B cell (primary cell): ENCODE measurements at regions of chr3 and their contacts with region 1.

Region 1: GRCh38 chr3:53255775-53256703 is at the start of gene TKT:
- DNase-seq: peak; percentile 87
- ATAC-seq: peak; percentile 87
- H3K4me3 ChIP-seq: peak within 1 kb of the TSS; percentile 72 to 83 (median 75)
- H3K4me3 Mint-ChIP-seq: peak within 1 kb of the TSS; percentile 91
- H3K27ac ChIP-seq: peak within 1 kb of the TSS; percentile 50 to 63
- H3K27ac Mint-ChIP-seq: peak within 1 kb of the TSS; percentile 81
- H3K4me1 ChIP-seq: peaks cover 30 to 42% of the 10 kb centered on the region in 2 donors
- H3K4me1 Mint-ChIP-seq: peaks cover 36% of the 10 kb centered on the region
- H3K27me3 ChIP-seq: no peaks in the 10 kb centered on the region
- H3K27me3 Mint-ChIP-seq: no peaks in the 10 kb centered on the region
- CTCF ChIP-seq: no peak
- total RNA-seq, gene TKT: 81.0 and 85.8 TPM in 2 replicates

Region 2: DNA sequence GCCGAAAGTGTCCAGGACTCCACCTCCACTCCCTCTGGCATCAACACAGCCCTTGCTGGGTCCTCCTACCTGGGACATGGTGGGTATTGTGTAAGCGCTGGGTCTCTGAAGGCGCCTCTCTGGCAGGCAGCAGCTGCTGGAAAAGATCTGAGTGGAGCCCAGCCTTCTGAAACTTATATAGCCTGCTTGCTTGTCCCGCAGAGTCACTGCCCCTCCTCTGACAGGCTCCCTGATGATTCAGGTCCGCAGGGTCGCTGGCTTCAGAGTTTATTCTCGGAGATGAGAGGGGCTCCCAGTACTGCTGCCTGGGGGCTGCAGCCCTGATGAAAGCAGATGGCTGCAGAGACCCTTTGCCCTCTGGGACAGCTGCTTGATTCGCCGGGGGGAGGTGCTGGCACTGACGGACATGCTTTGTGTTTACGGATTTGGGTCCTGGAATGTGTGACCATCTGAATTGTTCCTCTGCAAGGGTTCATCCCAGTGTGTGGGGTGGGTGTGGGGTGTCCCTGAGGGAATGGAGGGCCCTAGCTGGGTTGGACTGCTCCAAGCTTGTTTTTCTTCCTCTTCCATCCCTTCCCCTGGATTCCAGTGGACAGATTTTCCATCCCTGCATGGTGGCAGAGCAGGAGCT is 421.1 kb before region 1 on chr3 and contains the start of gene MUSTN1:
- CTCF ChIA-PET with region 1: no interaction called
- POLR2A ChIA-PET with region 1: no interaction called
- intact Hi-C with region 1: no loop called
- DNase-seq: no peak
- ATAC-seq: no peak
- H3K4me3 ChIP-seq: no peak within 1 kb of the TSS
- H3K4me3 Mint-ChIP-seq: no peak within 1 kb of the TSS
- H3K27ac ChIP-seq: no peak within 1 kb of the TSS
- H3K27ac Mint-ChIP-seq: no peak within 1 kb of the TSS
- H3K4me1 ChIP-seq: no peaks in the 10 kb centered on the region
- H3K4me1 Mint-ChIP-seq: no peaks in the 10 kb centered on the region
- H3K27me3 ChIP-seq: no peaks in the 10 kb centered on the region
- H3K27me3 Mint-ChIP-seq: no peaks in the 10 kb centered on the region
- CTCF ChIP-seq: no peak
- total RNA-seq, gene MUSTN1: 0.79 and 5.1 TPM in 2 replicates

Region 3: GRCh38 chr3:52897130-52898122 is 358.6 kb before region 1 on chr3 and contains the start of gene STIMATE:
- CTCF ChIA-PET with region 1: no interaction called
- POLR2A ChIA-PET with region 1: no interaction called
- intact Hi-C with region 1: loop called (anchors 10 kb)
- DNase-seq: peak; percentile 90
- ATAC-seq: peak; percentile 95
- H3K4me3 ChIP-seq: peak within 1 kb of the TSS; percentile 69 to 84 (median 78)
- H3K4me3 Mint-ChIP-seq: peak within 1 kb of the TSS; percentile 93
- H3K27ac ChIP-seq: peak within 1 kb of the TSS in 1 of 2 donors; percentile 52
- H3K27ac Mint-ChIP-seq: peak within 1 kb of the TSS; percentile 78
- H3K4me1 ChIP-seq: peaks cover 17 to 27% of the 10 kb centered on the region in 2 donors
- H3K4me1 Mint-ChIP-seq: peaks cover 48% of the 10 kb centered on the region
- H3K27me3 ChIP-seq: no peaks in the 10 kb centered on the region
- H3K27me3 Mint-ChIP-seq: no peaks in the 10 kb centered on the region
- CTCF ChIP-seq: no peak
- total RNA-seq, gene STIMATE: 37.7 and 38.4 TPM in 2 replicates

Region 4: GRCh38 chr3:53114011-53114400 is 142.0 kb before region 1 on chr3:
- CTCF ChIA-PET with region 1: interaction called, 4 read pairs
- POLR2A ChIA-PET with region 1: no interaction called
- intact Hi-C with region 1: loop called (anchors 5 kb)
- DNase-seq: peak; percentile 86
- ATAC-seq: peak; percentile 84
- H3K4me3 ChIP-seq: no peak overlapping the region
- H3K4me3 Mint-ChIP-seq: no peak overlapping the region
- H3K27ac ChIP-seq: no peak overlapping the region
- H3K27ac Mint-ChIP-seq: no peak overlapping the region
- H3K4me1 ChIP-seq: no peaks in the 10 kb centered on the region
- H3K4me1 Mint-ChIP-seq: no peaks in the 10 kb centered on the region
- H3K27me3 ChIP-seq: no peaks in the 10 kb centered on the region
- H3K27me3 Mint-ChIP-seq: no peaks in the 10 kb centered on the region
- CTCF ChIP-seq: peak; percentile 90

Region 5: DNA sequence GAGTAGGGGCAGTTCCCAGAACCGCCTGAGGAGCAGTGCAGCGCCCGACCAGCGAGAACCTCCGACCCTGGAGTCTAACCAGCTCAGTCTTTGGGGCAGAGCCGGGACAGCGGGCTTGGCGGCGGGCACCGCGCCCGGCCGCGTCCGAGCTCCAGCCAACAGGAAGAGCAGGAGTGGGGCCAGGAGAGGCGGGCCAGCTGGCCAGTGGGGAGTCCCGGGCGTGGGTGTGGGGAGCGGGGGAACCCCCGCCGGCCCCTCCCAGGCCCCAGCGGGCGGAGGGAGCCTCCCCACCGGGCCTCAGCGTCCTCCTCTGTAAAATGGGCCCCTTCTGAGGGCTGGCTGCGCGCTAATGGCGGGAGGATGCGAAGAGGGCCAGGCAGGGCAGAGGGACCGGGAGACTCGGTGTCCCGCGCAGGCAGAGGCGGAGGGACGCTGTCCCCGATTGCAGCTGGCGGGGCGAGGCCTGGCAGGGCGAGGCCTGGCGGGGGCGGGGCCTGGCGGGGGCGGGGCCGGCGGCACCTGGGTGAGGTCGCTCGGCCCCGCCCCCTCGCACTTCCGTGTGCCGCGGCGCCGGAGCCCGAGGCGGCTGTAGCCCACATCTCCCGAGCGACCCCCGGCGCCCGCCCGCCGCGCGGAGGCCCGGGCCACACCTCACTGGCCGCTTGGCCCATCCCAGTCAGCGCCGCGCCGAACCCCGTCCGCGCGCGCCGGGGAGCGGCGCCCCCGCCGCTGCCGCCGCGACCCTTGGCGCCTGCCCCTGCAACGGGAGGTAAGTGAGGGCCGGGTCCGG is 95.2 kb before region 1 on chr3 and contains the start of gene PRKCD:
- CTCF ChIA-PET with region 1: no interaction called
- POLR2A ChIA-PET with region 1: no interaction called
- intact Hi-C with region 1: loop called (anchors 2 kb)
- DNase-seq: peak; percentile 91
- ATAC-seq: peak; percentile 70
- H3K4me3 ChIP-seq: peak within 1 kb of the TSS; percentile 46 to 98 (median 86)
- H3K4me3 Mint-ChIP-seq: peak within 1 kb of the TSS; percentile 94
- H3K27ac ChIP-seq: peak within 1 kb of the TSS; percentile 80 to 82
- H3K27ac Mint-ChIP-seq: peak within 1 kb of the TSS; percentile 96
- H3K4me1 ChIP-seq: peaks cover 44 to 67% of the 10 kb centered on the region in 2 donors
- H3K4me1 Mint-ChIP-seq: peaks cover 54% of the 10 kb centered on the region
- H3K27me3 ChIP-seq: peaks cover 0 to 12% (median 5%) of the 10 kb centered on the region in 4 experiments
- H3K27me3 Mint-ChIP-seq: peaks cover 2% of the 10 kb centered on the region
- CTCF ChIP-seq: peak; percentile 70
- total RNA-seq, gene PRKCD: 42.7 and 46.7 TPM in 2 replicates

Region 6: GRCh38 chr3:53180305-53181023 is 75.6 kb before region 1 on chr3:
- CTCF ChIA-PET with region 1: no interaction called
- POLR2A ChIA-PET with region 1: no interaction called
- intact Hi-C with region 1: loop called (anchors 5 kb)
- DNase-seq: peak; percentile 92
- ATAC-seq: peak; percentile 97
- H3K4me3 ChIP-seq: peak overlapping the region in 4 of 5 experiments; percentile 16 to 57 (median 22)
- H3K4me3 Mint-ChIP-seq: peak overlapping the region; percentile 83
- H3K27ac ChIP-seq: peak overlapping the region in 1 of 2 donors; percentile 63
- H3K27ac Mint-ChIP-seq: peak overlapping the region; percentile 82
- H3K4me1 ChIP-seq: peaks cover 40 to 64% of the 10 kb centered on the region in 2 donors
- H3K4me1 Mint-ChIP-seq: peaks cover 54% of the 10 kb centered on the region
- H3K27me3 ChIP-seq: no peaks in the 10 kb centered on the region
- H3K27me3 Mint-ChIP-seq: no peaks in the 10 kb centered on the region
- CTCF ChIP-seq: no peak

Region 7: GRCh38 chr3:53231572-53232511 is 24.2 kb before region 1 on chr3:
- CTCF ChIA-PET with region 1: no interaction called
- POLR2A ChIA-PET with region 1: no interaction called
- intact Hi-C with region 1: no loop called
- DNase-seq: no peak
- ATAC-seq: no peak
- H3K4me3 ChIP-seq: no peak overlapping the region
- H3K4me3 Mint-ChIP-seq: no peak overlapping the region
- H3K27ac ChIP-seq: no peak overlapping the region
- H3K27ac Mint-ChIP-seq: no peak overlapping the region
- H3K4me1 ChIP-seq: no peaks in the 10 kb centered on the region
- H3K4me1 Mint-ChIP-seq: no peaks in the 10 kb centered on the region
- H3K27me3 ChIP-seq: no peaks in the 10 kb centered on the region
- H3K27me3 Mint-ChIP-seq: no peaks in the 10 kb centered on the region
- CTCF ChIP-seq: no peak

Region 8: GRCh38 chr3:53320697-53321096 is 64.7 kb after region 1 on chr3:
- CTCF ChIA-PET with region 1: no interaction called
- POLR2A ChIA-PET with region 1: no interaction called
- intact Hi-C with region 1: no loop called
- DNase-seq: no peak
- ATAC-seq: no peak
- H3K4me3 ChIP-seq: no peak overlapping the region
- H3K4me3 Mint-ChIP-seq: no peak overlapping the region
- H3K27ac ChIP-seq: no peak overlapping the region
- H3K27ac Mint-ChIP-seq: no peak overlapping the region
- H3K4me1 ChIP-seq: no peaks in the 10 kb centered on the region
- H3K4me1 Mint-ChIP-seq: peaks cover 6% of the 10 kb centered on the region
- H3K27me3 ChIP-seq: no peaks in the 10 kb centered on the region
- H3K27me3 Mint-ChIP-seq: no peaks in the 10 kb centered on the region
- CTCF ChIP-seq: no peak

Region 9: GRCh38 chr3:53347261-53348064 is 91.4 kb after region 1 on chr3 and contains the start of gene DCP1A:
- CTCF ChIA-PET with region 1: no interaction called
- POLR2A ChIA-PET with region 1: no interaction called
- intact Hi-C with region 1: loop called (anchors 5 kb)
- DNase-seq: peak; percentile 97
- ATAC-seq: peak; percentile 93
- H3K4me3 ChIP-seq: peak within 1 kb of the TSS; percentile 86 to 99 (median 96)
- H3K4me3 Mint-ChIP-seq: peak within 1 kb of the TSS; percentile 100
- H3K27ac ChIP-seq: peak within 1 kb of the TSS; percentile 89 to 95
- H3K27ac Mint-ChIP-seq: peak within 1 kb of the TSS; percentile 99
- H3K4me1 ChIP-seq: peaks cover 11 to 15% of the 10 kb centered on the region in 2 donors
- H3K4me1 Mint-ChIP-seq: peaks cover 23% of the 10 kb centered on the region
- H3K27me3 ChIP-seq: no peaks in the 10 kb centered on the region
- H3K27me3 Mint-ChIP-seq: no peaks in the 10 kb centered on the region
- CTCF ChIP-seq: no peak
- total RNA-seq, gene DCP1A: 44.6 and 47.7 TPM in 2 replicates